PC-3 (cell line): ENCODE measurements at regions of chr5 and their contacts with region 1.

Region 1: DNA sequence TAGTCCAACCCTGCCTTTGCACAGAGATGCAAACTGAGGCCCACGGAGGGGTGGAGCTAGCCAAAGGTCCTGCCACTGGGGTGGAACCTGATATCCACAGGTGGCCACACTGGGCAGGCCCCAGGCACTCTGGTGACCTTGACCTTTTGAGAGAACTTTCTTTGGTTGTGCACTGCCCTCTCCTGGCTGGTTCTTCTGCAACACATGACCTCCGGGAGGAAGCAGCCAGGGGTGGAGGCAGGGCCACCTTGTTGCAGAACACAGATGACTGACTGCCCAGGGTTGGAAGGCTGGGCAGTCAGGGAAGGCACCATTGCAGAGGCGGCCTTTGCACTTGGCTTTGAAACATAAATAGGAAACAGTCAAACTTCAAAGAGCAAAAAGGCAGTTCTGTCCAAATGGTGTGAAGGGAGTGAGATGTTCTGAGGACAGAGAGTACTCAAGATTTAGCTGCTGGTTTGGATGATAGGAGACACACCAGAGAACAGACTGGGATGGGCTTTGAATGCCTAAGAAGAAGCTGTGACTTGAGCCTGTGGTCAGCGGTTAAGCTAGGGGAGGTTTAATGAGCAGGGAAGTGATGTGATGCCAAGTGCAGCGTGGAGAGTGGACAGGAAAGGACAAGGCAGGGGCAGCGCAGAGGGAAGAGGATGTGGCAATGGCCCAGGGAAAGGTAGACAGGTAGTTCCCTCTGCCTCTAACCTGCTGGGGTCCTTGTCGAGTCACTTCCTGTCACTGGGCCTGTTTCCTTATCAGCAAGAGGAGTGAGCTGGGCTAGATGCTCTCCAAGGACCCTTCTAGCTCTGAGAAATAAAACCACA is 6.8 kb upstream of the TCOF1 start:
- DNase-seq: peak; percentile 88
- ATAC-seq: peak; percentile 97
- H3K4me3 ChIP-seq: no peak overlapping the region
- H3K27ac ChIP-seq: no peak overlapping the region
- H3K4me1 ChIP-seq: peaks cover 5% of the 10 kb centered on the region
- H3K27me3 ChIP-seq: no peaks in the 10 kb centered on the region
- CTCF ChIP-seq: peak; percentile 99

Region 2: DNA sequence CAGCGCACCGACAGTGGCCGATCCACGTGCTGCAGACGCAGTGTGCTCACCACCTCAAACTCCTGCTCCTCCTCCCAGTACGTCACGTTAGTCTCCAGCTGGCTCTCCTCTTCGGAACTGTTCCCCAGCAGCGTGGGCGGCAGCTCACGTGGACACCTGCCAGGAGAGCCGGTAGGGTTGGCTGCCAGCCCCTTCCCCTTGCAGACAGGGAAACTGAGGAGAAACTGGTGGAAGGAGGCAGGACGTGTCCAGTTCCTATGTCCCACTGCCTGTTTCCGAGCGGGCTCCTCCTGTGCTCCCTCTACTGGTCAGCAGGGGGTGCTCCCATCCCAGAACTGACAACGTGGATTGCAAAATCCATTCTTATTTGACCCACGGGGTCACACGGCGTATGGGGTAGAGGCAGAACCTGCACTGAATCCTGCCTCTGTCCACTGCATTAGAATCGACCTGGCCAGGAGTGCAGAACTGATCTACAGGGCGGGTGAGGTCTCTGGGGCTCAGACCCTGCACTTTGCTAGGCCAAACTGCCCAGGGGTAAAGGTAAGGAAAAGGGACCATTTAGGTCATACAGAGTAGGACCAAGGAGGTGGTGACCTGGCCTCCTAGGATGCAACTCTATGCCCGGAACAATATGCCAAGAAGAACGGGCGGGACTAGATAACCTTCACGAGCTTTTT is 220.8 kb before region 1 on chr5:
- CTCF ChIA-PET with region 1: no interaction called
- POLR2A ChIA-PET with region 1: no interaction called
- intact Hi-C with region 1: loop called (anchors 1 kb)
- DNase-seq: peak; percentile 88
- ATAC-seq: peak; percentile 89
- H3K4me3 ChIP-seq: peak overlapping the region; percentile 59
- H3K27ac ChIP-seq: no peak overlapping the region
- H3K4me1 ChIP-seq: peaks cover 6% of the 10 kb centered on the region; the same call in 1 of the 2 replicates
- H3K27me3 ChIP-seq: no peaks in the 10 kb centered on the region
- CTCF ChIP-seq: peak; percentile 99

Region 3: GRCh38 chr5:150161242-150162141 is 189.2 kb before region 1 on chr5:
- CTCF ChIA-PET with region 1: interaction called, 10 read pairs
- POLR2A ChIA-PET with region 1: no interaction called
- intact Hi-C with region 1: loop called (anchors 1 kb)
- DNase-seq: peak; percentile 97
- ATAC-seq: peak; percentile 92
- H3K4me3 ChIP-seq: peak overlapping the region; percentile 51
- H3K27ac ChIP-seq: no peak overlapping the region
- H3K4me1 ChIP-seq: peaks cover 5% of the 10 kb centered on the region; the same call in 1 of the 2 replicates
- H3K27me3 ChIP-seq: no peaks in the 10 kb centered on the region
- CTCF ChIP-seq: peak; percentile 93

Region 4: GRCh38 chr5:150206098-150206778 is 144.5 kb before region 1 on chr5:
- CTCF ChIA-PET with region 1: no interaction called
- POLR2A ChIA-PET with region 1: no interaction called
- intact Hi-C with region 1: no loop called
- DNase-seq: no peak
- ATAC-seq: no peak
- H3K4me3 ChIP-seq: no peak overlapping the region
- H3K27ac ChIP-seq: no peak overlapping the region
- H3K4me1 ChIP-seq: peaks cover 16% of the 10 kb centered on the region
- H3K27me3 ChIP-seq: no peaks in the 10 kb centered on the region
- CTCF ChIP-seq: no peak

Region 5: DNA sequence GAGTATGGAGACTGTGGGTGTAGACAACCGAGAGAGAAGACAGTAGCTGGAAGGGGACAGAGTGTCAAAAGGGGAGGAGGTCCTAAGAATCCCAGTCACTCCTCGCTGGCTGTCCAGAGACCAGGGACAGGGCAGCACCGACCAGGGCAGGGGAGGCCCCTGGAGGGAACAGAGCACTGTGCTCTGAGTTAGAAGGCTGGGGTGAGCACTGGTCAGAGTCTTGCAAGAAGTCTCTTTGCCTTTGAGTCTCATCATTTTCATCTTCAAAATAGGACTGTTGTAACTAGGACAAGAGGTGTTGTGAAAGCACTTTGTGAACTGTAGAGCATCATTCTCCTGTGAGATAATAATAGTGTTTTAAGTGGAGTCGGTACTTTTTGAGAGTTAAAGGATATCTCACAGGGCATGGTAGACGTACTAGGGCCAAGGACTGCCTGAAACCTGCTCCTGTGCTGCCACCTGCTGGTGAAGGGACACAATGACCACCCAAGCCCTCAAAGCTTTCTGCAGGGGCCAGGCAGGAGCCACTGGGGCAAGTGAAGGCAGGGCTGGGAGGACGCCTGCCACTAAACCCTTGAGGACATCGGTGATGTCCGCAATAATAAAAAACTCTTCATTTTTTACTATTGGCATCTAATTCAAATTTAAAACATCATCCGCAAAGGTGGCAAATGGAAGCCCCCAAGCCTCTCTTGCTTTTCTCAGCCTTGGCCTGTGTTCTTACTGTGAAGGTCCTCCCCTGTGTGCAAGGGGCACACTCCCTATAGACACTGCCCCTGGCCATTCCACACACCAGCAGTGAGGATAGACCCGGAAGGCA is 132.7 kb before region 1 on chr5:
- CTCF ChIA-PET with region 1: no interaction called
- POLR2A ChIA-PET with region 1: no interaction called
- intact Hi-C with region 1: loop called (anchors 1 kb)
- DNase-seq: peak; percentile 93
- ATAC-seq: peak; percentile 94
- H3K4me3 ChIP-seq: no peak overlapping the region
- H3K27ac ChIP-seq: no peak overlapping the region
- H3K4me1 ChIP-seq: peaks cover 8% of the 10 kb centered on the region; the same call in 1 of the 2 replicates
- H3K27me3 ChIP-seq: no peaks in the 10 kb centered on the region
- CTCF ChIP-seq: peak; percentile 97

Region 6: DNA sequence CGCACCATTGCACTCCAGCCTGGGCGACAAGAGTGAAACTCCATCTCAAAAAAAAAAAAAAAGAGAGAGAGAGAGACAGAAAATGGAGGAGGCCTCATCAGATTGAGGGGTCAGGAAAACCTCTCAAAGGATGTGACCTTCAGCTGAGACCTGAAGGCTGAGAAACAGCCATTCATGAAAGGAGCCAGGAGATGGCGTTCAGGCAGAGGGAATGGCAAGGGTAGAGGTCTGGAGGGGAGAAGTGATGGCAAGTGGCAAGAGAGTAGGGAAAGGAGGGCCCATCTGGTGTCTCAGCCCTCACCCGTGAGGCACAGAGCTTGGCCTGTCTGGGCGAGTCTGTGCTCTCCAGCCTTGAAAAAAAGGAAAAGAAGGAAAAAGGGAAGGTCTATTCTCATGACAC is 78.2 kb before region 1 on chr5:
- CTCF ChIA-PET with region 1: no interaction called
- POLR2A ChIA-PET with region 1: no interaction called
- intact Hi-C with region 1: loop called (anchors 1 kb)
- DNase-seq: peak; percentile 72
- ATAC-seq: peak; percentile 74
- H3K4me3 ChIP-seq: no peak overlapping the region
- H3K27ac ChIP-seq: no peak overlapping the region
- H3K4me1 ChIP-seq: no peaks in the 10 kb centered on the region
- H3K27me3 ChIP-seq: 0 out of 2 replicates have a peak, but pooled peaks cover 6% of the 10 kb centered on the region
- CTCF ChIP-seq: peak; percentile 70

Region 7: GRCh38 chr5:150289551-150290390 is 61.0 kb before region 1 on chr5 and contains the start of gene CAMK2A:
- CTCF ChIA-PET with region 1: no interaction called
- POLR2A ChIA-PET with region 1: interaction called, 23 read pairs
- intact Hi-C with region 1: no loop called
- DNase-seq: no peak
- ATAC-seq: no peak
- H3K4me3 ChIP-seq: no peak within 1 kb of the TSS
- H3K27ac ChIP-seq: no peak within 1 kb of the TSS
- H3K4me1 ChIP-seq: peaks cover 3% of the 10 kb centered on the region
- H3K27me3 ChIP-seq: no peaks in the 10 kb centered on the region; the same call in 1 of the 2 replicates
- CTCF ChIP-seq: no peak
- total RNA-seq, gene CAMK2A: 0.15 TPM in 1 of 2 replicates, not detected in the other